Heart right ventricle (tissue), 16 donors: ENCODE measurements at regions of chr11 and their contacts with region 1.

Region 1: GRCh38 chr11:59822989-59823566 is 12.5 kb upstream of the MRPL16 start:
- DNase-seq: peak in 1 of 2 donors; percentile 52
- ATAC-seq: peak in 6 of 8 donors; percentile 72 to 86 (median 74)
- H3K4me3 ChIP-seq: no peak overlapping the region
- H3K27ac ChIP-seq: no peak overlapping the region
- H3K4me1 ChIP-seq: peaks cover 0 to 6% (median 0%) of the 10 kb centered on the region in 9 donors
- H3K27me3 ChIP-seq: no peaks in the 10 kb centered on the region
- CTCF ChIP-seq: peak; percentile 26 to 79 (median 63)

Region 2: GRCh38 chr11:59891781-59892181 is 68.7 kb after region 1 on chr11:
- intact Hi-C with region 1: loop called in 1 of 10 experiments (anchors 10 kb)
- DNase-seq: peak; percentile 11 to 29
- ATAC-seq: peak in 3 of 8 donors; percentile 39 to 76 (median 45)
- H3K4me3 ChIP-seq: no peak overlapping the region
- H3K27ac ChIP-seq: no peak overlapping the region
- H3K4me1 ChIP-seq: no peaks in the 10 kb centered on the region
- H3K27me3 ChIP-seq: peaks cover 0 to 3% (median 0%) of the 10 kb centered on the region in 7 donors
- CTCF ChIP-seq: no peak

Region 3: GRCh38 chr11:60121264-60121663 is 298.2 kb after region 1 on chr11:
- intact Hi-C with region 1: loop called in 2 of 10 experiments (anchors 5 to 10 kb)
- DNase-seq: no peak
- ATAC-seq: no peak
- H3K4me3 ChIP-seq: no peak overlapping the region
- H3K27ac ChIP-seq: no peak overlapping the region
- H3K4me1 ChIP-seq: no peaks in the 10 kb centered on the region
- H3K27me3 ChIP-seq: no peaks in the 10 kb centered on the region
- CTCF ChIP-seq: no peak

Region 4: DNA sequence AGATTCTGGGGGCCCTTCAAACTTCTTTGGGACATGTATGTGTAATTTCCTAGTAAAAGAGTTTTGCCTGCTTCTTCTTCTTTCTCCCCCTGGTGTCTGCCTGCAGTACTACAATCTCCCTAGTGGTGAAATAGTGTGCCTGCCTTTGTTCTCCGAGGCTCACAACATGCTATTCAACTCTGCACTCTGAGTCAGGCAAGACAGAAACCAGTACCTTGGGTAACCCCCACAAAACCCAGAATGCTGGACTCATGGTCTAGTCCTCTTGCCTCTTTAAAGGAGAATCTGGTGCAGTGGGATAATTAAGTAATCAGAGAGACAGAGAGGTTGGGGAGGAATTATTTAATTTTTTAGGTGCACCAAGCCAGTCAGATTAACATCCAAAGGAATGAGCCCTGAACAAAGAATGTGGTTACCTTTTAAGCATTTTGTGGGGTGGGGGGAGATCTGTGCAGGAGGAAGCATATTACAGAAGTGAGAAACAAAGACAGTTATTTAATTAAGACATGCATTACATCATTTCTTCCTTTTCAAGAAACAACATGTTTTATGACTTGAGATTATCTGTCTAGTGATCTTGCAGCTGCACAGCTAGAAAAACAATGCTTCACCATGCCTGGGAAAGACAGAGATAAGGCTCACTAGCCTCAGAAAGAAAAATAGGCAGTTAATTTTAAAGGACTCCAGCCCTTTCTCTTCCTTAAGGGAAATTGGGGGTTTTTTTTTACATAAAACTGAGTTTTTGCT is 370.8 kb after region 1 on chr11:
- intact Hi-C with region 1: loop called in 8 of 10 experiments (anchors 5 to 10 kb)
- DNase-seq: peak in 1 of 2 donors; percentile 76
- ATAC-seq: peak in 7 of 8 donors; percentile 67 to 86 (median 75)
- H3K4me3 ChIP-seq: no peak overlapping the region
- H3K27ac ChIP-seq: peak overlapping the region in 5 of 10 donors; percentile 19 to 66 (median 41)
- H3K4me1 ChIP-seq: peaks cover 0 to 18% (median 0%) of the 10 kb centered on the region in 9 donors
- H3K27me3 ChIP-seq: no peaks in the 10 kb centered on the region
- CTCF ChIP-seq: peak; percentile 59 to 92 (median 81)

Region 5: DNA sequence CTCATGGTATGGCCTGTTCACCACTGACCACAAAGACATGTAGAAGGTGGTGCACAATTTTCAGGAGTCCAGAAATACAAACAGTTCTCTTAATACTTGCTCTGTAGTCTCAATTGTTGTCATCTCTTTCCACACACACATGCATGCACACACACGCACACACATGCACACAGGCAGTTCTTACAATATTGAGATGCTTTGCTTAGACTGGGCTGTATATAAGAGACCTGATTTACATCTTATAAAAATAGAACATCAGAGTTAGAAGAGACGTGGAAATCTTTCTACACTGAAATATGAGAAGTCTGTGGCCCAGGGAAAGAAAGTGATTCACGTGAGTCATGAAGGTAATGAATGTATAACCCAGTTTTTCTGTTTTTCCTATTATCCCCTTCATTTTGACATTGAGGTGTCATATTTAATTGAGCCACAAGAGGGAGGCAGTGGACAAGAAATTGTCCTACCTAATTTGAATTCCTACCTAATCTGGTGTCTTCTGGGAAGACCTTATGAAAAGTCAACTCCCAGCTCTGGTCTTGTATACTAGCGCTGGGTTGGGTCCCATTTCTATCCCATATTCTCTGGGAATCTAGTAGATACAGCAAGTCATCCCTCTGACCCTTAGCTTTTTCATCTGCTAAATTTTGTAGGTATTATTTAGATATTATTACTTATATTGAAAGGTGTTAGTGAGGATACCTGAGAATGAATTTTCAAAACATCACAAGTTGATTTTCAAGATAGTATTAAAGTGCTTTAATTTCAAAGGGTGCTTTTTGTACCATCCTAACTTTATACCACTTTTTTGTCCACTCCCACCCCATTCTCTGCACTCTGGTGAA is 442.5 kb after region 1 on chr11:
- intact Hi-C with region 1: loop called in 1 of 10 experiments (anchors 10 kb)
- DNase-seq: peak in 1 of 2 donors; percentile 11
- ATAC-seq: peak in 1 of 8 donors; percentile 33
- H3K4me3 ChIP-seq: no peak overlapping the region
- H3K27ac ChIP-seq: no peak overlapping the region
- H3K4me1 ChIP-seq: peaks cover 0 to 9% (median 0%) of the 10 kb centered on the region in 9 donors
- H3K27me3 ChIP-seq: peaks cover 0 to 5% (median 0%) of the 10 kb centered on the region in 7 donors
- CTCF ChIP-seq: peak; percentile 49 to 78 (median 67)